PC-9 (cell line): ENCODE measurements at regions of chr6 and their contacts with region 1.

Region 1: DNA sequence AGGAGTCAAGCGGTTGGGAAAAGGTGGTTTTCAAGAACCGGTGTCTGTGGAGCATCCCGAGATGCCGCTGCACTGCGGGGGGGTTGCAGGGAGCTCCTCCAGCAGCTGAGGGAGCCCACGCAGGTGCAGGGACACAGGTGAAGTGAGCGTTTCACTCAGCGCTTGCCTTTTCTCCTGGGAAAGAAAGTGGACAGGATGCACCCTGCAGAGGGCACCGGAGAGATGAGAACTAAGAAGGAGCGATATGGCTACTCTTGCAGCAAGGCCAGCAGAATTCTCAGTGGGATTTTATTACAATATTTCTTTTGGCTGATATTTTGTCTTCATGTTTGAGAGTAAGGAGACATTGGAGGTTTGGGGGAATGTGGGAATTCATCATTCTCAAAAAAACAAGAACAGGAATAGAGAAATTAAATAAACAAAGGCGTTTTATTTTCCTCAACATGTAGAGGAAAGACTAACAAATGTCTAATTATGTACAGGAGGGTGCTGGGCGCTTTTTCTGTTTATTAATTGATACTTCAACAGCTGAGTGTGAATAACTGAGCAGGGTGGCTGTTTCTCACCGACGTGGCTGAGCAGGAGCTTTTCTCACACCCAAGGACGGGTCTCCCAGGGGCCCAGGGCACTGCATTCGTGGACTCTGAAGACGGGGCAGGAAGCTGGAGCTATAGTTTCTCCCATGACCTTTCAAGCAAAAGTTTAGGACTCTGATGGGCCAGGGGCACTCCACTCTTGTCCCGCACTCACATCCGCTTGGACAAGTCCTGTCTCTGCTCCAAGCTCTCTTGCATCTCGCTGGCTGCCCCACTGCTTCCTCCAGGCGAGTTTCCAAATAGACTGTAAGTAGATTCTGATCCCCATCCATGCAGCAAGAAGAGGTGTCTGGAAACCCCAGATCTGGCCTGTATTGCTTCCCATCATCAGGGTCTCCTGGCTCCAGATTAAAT is 176.1 kb downstream of the SMOC2 start:
- DNase-seq: peak in 1 of 2 experiments; percentile 29
- H3K4me3 ChIP-seq: no peak overlapping the region
- H3K27ac ChIP-seq: no peak overlapping the region
- H3K4me1 ChIP-seq: peaks cover 4% of the 10 kb centered on the region; the same call in 1 of the 2 replicates
- H3K27me3 ChIP-seq: no peaks in the 10 kb centered on the region
- CTCF ChIP-seq: peak; percentile 65

Region 2: GRCh38 chr6:168292826-168293225 is 324.3 kb before region 1 on chr6:
- CTCF ChIA-PET with region 1: no interaction called
- POLR2A ChIA-PET with region 1: no interaction called
- intact Hi-C with region 1: no loop called
- DNase-seq: no peak
- H3K4me3 ChIP-seq: no peak overlapping the region
- H3K27ac ChIP-seq: no peak overlapping the region
- H3K4me1 ChIP-seq: no peaks in the 10 kb centered on the region
- H3K27me3 ChIP-seq: peaks cover 87% of the 10 kb centered on the region
- CTCF ChIP-seq: no peak

Region 3: GRCh38 chr6:168456907-168457645 is 160.0 kb before region 1 on chr6:
- CTCF ChIA-PET with region 1: no interaction called
- POLR2A ChIA-PET with region 1: no interaction called
- intact Hi-C with region 1: no loop called
- DNase-seq: no peak
- H3K4me3 ChIP-seq: no peak overlapping the region
- H3K27ac ChIP-seq: no peak overlapping the region
- H3K4me1 ChIP-seq: no peaks in the 10 kb centered on the region
- H3K27me3 ChIP-seq: peaks cover 95% of the 10 kb centered on the region
- CTCF ChIP-seq: no peak

Region 4: GRCh38 chr6:168533414-168533813 is 83.7 kb before region 1 on chr6:
- CTCF ChIA-PET with region 1: no interaction called
- POLR2A ChIA-PET with region 1: no interaction called
- intact Hi-C with region 1: no loop called
- DNase-seq: no peak
- H3K4me3 ChIP-seq: no peak overlapping the region
- H3K27ac ChIP-seq: no peak overlapping the region
- H3K4me1 ChIP-seq: no peaks in the 10 kb centered on the region
- H3K27me3 ChIP-seq: peaks cover 54% of the 10 kb centered on the region
- CTCF ChIP-seq: no peak

Region 5: GRCh38 chr6:168884646-168885086 is 267.6 kb after region 1 on chr6:
- CTCF ChIA-PET with region 1: no interaction called
- POLR2A ChIA-PET with region 1: no interaction called
- intact Hi-C with region 1: loop called (anchors 2 kb)
- DNase-seq: peak in 1 of 2 experiments; percentile 33
- H3K4me3 ChIP-seq: no peak overlapping the region
- H3K27ac ChIP-seq: no peak overlapping the region
- H3K4me1 ChIP-seq: no peaks in the 10 kb centered on the region
- H3K27me3 ChIP-seq: peaks cover 22% of the 10 kb centered on the region
- CTCF ChIP-seq: peak; percentile 93